ENCODE measurements at regions of chr7 and their contacts with region 1.

Region 1: DNA sequence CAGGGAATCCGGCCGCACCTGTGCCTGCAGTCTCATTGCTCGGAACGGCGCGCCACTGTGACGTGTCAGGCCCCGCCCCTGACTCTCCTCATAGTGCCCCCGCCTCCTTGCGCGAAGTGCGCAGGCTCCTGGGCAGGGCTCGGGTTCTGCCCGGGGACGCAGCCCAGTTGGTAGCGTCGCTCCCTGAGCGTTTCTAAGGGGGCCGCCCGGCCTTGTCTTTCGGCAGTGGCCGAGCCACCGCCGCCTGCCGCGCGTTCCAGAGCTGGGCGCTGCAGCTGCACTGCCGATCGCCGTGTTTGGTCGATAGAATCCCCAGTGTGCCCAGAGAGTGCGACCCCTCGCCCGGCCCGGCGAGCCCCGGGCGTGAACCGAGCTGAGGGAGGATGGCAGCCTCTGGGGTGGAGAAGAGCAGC is at the start of gene KLHL7:
- DNase-seq: peak; percentile 96 to 97
- ATAC-seq: peak; percentile 98 to 99 (median 98)
- H3K4me3 ChIP-seq: peak within 1 kb of the TSS; percentile 67 to 98 (median 86)
- H3K27ac ChIP-seq: peak within 1 kb of the TSS; percentile 84 to 95 (median 92)
- H3K4me1 ChIP-seq: peaks cover 0 to 47% (median 32%) of the 10 kb centered on the region in 9 donors
- H3K27me3 ChIP-seq: no peaks in the 10 kb centered on the region
- CTCF ChIP-seq: peak in 1 of 9 donors; percentile 7
- total RNA-seq, gene KLHL7: 86.3 to 159 (median 146) TPM

Region 2: GRCh38 chr7:22896917-22897316 is 208.7 kb before region 1 on chr7:
- intact Hi-C with region 1: no loop called
- DNase-seq: no peak
- ATAC-seq: peak in 1 of 8 donors; percentile 27
- H3K4me3 ChIP-seq: no peak overlapping the region
- H3K27ac ChIP-seq: no peak overlapping the region
- H3K4me1 ChIP-seq: no peaks in the 10 kb centered on the region
- H3K27me3 ChIP-seq: no peaks in the 10 kb centered on the region
- CTCF ChIP-seq: no peak

Region 3: GRCh38 chr7:23175938-23176337 is 70.3 kb after region 1 on chr7:
- intact Hi-C with region 1: loop called in 7 of 10 experiments (anchors 1 to 10 kb)
- DNase-seq: no peak
- ATAC-seq: peak in 1 of 8 donors; percentile 42
- H3K4me3 ChIP-seq: no peak overlapping the region
- H3K27ac ChIP-seq: no peak overlapping the region
- H3K4me1 ChIP-seq: peaks cover 0 to 4% (median 0%) of the 10 kb centered on the region in 9 donors
- H3K27me3 ChIP-seq: no peaks in the 10 kb centered on the region
- CTCF ChIP-seq: no peak

Region 4: GRCh38 chr7:23247603-23248335 is 142.1 kb after region 1 on chr7:
- intact Hi-C with region 1: loop called in 4 of 10 experiments (anchors 5 to 10 kb)
- DNase-seq: peak; percentile 40 to 55
- ATAC-seq: peak; percentile 76 to 87 (median 79)
- H3K4me3 ChIP-seq: peak overlapping the region; percentile 43 to 66 (median 60)
- H3K27ac ChIP-seq: peak overlapping the region; percentile 55 to 91 (median 82)
- H3K4me1 ChIP-seq: peaks cover 0 to 42% (median 23%) of the 10 kb centered on the region in 9 donors
- H3K27me3 ChIP-seq: peaks cover 0 to 15% (median 0%) of the 10 kb centered on the region in 7 donors
- CTCF ChIP-seq: no peak

Region 5: DNA sequence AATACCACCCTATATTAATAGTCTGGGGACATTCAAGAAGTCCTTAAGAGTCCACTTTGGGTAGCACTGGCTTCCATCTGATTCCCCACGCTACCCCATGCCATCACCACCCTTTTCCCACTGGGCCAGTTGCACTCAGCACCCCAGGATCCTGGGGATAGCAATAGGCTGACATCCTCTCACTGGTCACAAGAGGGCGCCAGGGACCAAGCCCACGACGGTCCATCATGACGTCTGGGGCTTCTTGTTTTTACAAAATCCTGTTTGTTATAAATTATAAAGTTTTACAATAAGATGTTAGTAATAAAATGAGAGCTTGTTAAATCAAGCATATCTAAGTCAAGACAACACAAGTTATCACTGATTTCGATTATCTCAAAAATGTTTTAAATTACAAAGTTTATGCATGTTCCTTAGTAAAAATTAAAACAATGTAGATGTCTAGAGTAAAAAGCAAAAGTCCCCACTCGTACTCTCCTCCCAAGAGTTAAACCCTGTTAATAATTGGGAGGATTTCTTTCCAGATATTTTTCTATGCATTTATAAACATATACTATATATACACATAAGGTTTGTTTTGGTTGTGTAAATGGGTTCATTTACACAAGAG is 156.3 kb after region 1 on chr7:
- intact Hi-C with region 1: loop called in 2 of 10 experiments (anchors 10 kb)
- DNase-seq: peak; percentile 32 to 45
- ATAC-seq: peak; percentile 65 to 82 (median 74)
- H3K4me3 ChIP-seq: no peak overlapping the region
- H3K27ac ChIP-seq: no peak overlapping the region
- H3K4me1 ChIP-seq: no peaks in the 10 kb centered on the region
- H3K27me3 ChIP-seq: peaks cover 0 to 3% (median 0%) of the 10 kb centered on the region in 7 donors
- CTCF ChIP-seq: peak; percentile 49 to 91 (median 80)

Measured in heart right ventricle (tissue), 16 donors.